GM10248 (cell line): ENCODE measurements at regions of chr17 and their contacts with region 1.

Region 1: DNA sequence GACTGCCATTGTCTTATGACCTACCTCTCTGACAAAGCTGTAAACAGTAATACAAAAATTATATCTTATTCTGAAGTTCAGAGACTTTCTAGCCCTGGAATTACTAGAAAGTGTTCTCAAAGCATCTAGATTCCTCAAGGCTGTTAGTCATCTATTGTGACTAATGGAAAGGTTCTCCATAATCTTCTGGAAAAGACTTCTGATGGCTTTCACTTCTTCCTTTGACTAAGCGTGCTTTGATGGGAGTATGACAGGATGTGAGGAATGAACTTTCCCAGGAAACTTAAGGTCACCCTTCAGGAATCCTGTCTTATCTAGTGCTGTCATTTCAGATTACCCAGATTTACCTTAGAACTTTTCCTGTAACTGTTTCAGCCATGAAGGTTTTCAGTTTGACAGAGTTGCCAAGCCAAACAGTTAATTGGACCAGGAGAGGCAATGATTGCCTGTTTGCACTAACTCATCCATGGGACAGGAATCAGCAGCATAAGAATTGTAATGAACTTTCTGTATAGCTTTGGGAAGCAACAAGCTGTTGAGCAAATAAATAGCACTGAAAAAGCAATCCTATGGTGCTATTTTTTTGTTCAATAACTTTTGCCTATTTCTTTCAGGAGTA is 43.5 kb downstream of the AP2B1 start:
- DNase-seq: no peak
- CTCF ChIP-seq: no peak

Region 2: DNA sequence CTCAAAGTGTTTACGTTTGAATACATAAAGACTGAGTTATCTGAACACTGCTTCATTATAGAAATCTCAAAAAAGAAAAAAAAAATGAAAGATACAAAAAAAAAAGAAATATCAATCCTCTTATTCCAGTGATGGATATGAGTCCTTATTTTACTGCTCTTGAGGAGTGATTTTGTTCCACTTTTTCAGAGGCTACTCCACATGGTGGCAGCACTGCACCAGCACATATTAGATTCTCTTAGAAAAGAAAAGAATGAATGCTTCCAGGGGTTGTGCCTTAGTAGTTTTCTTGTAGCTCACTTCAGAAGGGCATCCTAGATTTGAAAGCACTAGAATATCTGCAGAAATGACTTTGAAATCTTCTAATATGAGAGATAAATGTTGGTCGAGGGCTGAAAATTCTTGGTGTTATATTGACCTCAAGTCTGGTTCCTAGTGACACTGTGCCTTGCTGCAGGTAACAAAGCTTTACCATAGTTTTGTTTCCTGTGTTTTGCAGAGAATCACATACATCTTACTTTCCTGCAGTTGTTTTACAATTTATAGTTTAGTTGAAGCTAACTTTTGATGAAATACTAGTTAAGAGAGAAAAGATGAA is 17.6 kb before region 1 on chr17:
- CTCF ChIA-PET with region 1: interaction called, 37 read pairs
- POLR2A ChIA-PET with region 1: no interaction called
- DNase-seq: peak; percentile 20
- CTCF ChIP-seq: peak; percentile 69

Region 3: GRCh38 chr17:35660902-35661301 is 30.3 kb after region 1 on chr17:
- CTCF ChIA-PET with region 1: no interaction called
- POLR2A ChIA-PET with region 1: no interaction called
- DNase-seq: no peak
- CTCF ChIP-seq: no peak